Right ventricle myocardium inferior (tissue), 1 donor: ENCODE measurements at regions of chr10 and their contacts with region 1.

Region 1: GRCh38 chr10:74891053-74891452 is 64.7 kb downstream of the KAT6B start:
- DNase-seq: no peak
- ATAC-seq: no peak

Region 2: DNA sequence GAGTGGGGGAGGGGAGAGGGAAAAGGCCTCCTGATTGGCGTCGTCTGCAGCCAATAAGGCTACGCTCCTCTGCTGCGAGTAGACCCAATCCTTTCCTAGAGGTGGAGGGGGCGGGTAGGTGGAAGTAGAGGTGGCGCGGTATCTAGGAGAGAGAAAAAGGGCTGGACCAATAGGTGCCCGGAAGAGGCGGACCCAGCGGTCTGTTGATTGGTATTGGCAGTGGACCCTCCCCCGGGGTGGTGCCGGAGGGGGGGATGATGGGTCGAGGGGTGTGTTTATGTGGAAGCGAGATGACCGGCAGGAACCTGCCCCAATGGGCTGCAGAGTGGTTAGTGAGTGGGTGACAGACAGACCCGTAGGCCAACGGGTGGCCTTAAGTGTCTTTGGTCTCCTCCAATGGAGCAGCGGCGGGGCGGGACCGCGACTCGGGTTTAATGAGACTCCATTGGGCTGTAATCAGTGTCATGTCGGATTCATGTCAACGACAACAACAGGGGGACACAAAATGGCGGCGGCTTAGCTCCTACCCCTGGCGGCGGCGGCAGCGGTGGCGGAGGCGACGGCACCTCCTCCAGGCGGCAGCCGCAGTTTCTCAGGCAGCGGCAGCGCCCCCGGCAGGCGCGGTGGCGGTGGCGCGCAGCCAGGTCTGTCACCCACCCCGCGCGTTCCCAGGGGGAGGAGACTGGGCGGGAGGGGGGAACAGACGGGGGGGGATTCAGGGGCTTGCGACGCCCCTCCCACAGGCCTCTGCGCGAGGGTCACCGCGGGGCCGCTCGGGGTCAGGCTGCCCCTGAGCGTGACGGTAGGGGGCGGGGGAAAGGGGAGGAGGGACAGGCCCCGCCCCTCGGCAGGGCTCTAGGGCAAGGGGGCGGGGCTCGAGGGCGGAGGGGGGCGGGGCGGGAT is 64.7 kb before region 1 on chr10 and contains the start of gene KAT6B:
- intact Hi-C with region 1: no loop called
- DNase-seq: peak; percentile 100
- ATAC-seq: peak; percentile 94
- total RNA-seq, gene KAT6B: 42.6 TPM

Region 3: DNA sequence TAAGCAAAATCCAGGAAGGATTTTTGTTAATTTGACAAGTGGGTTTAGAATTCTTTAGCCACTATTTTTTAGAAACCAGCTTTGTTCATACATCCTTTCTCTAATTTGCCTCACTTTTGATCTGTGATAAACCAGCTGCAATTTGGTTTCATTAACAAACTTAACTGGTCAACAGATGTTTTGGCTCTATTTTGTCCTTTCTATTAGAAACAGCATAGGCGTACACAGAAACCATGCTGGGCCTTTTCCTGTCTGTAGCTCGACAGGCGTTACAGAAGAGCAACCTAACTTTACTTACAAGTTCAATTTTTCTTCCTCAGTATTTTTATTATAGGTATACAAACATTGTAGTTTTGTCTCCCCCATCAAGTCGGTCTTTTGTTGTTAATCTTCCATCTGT is 36.4 kb before region 1 on chr10:
- intact Hi-C with region 1: loop called (anchors 5 kb)
- DNase-seq: no peak
- ATAC-seq: no peak

Region 4: GRCh38 chr10:75029857-75030256 is 138.8 kb after region 1 on chr10:
- intact Hi-C with region 1: no loop called
- DNase-seq: peak; percentile 77
- ATAC-seq: peak; percentile 71